ENCODE measurements at regions of chr3 and their contacts with region 1.

Region 1: DNA sequence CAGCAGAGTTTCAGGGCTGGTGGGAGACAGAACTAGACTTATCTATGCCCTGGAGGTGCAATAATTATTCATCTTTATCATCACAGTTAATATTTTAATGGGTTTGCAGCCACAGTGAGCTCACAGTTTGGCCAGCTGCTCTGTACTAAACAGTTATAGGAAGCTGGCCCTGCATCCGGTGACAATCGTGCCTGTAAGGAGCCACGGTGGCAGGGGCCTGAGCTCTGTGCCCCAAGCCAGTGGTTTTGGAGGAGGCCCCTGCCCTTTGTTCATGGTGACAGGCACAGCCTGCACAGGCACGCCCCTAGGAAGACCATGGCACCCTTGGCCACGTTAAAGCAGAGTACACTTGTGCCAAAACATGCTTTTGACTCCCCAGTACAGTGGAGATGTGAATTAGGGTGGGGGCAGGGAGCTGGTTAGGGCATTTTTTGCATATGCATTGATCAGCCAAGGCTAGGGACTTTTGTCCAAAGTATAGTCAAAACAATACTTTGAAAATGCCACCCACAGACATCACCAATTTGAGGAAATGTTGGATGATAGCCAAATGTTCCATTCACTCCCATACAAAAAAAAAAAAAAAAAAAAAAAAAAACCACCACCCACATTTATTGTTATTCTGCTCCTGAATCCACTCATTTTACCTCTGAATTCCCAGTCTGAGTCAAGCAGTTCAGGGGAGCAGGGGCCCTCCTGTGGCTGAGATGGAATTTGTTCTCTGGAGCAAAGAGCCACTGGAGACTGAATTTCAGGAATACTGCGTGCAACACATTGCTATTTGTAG is 3.4 kb upstream of the RFTN1 start:
- DNase-seq: no peak
- ATAC-seq: peak; percentile 24
- H3K4me3 ChIP-seq: peak overlapping the region; percentile 86
- H3K27ac ChIP-seq: peak overlapping the region; percentile 92
- H3K4me1 ChIP-seq: peaks cover 52% of the 10 kb centered on the region
- H3K27me3 ChIP-seq: no peaks in the 10 kb centered on the region
- CTCF ChIP-seq: peak in 1 of 3 experiments; percentile 16; a peak in 1 of 6 replicates
- EP300 ChIP-seq: peak; percentile 22 to 25; a peak in 2 of 4 replicates
- POLR2A ChIP-seq: peak; percentile 40; the same call in 1 of the 2 replicates
- RAD21 ChIP-seq: no peak

Region 2: DNA sequence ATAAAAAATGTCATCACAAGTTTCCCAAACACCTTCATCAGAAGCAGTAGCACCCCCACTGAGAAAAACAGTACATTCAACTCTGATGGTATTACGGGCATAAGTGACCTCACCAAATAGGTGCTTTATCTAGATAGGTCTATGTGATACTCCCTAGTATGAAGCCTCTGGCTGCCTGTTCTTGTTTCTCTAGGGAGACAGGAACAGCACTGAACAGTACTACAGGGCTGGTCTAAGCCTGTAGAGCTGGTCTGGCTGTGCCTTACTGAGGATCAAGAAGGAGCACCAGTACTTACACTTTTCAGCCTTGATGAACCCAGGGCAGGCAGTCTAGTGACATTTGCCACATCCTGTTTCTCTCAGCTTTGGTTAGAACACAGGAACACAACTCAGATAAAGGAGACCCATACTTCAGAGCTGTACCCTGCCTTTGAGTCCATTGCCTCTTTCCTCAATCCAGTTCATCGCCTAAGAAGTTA is 216.0 kb before region 1 on chr3:
- CTCF ChIA-PET with region 1: interaction called, 3 read pairs
- POLR2A ChIA-PET with region 1: interaction called, 3 read pairs
- RAD21 ChIA-PET with region 1: interaction called, 12 read pairs
- SMC1A ChIA-PET with region 1: interaction called, 8 read pairs
- in situ Hi-C with region 1: no loop called
- intact Hi-C with region 1: no loop called
- DNase-seq: peak; percentile 48
- ATAC-seq: peak; percentile 75
- H3K4me3 ChIP-seq: no peak overlapping the region
- H3K27ac ChIP-seq: peak overlapping the region; percentile 33
- H3K4me1 ChIP-seq: peaks cover 20% of the 10 kb centered on the region
- H3K27me3 ChIP-seq: no peaks in the 10 kb centered on the region
- CTCF ChIP-seq: no peak
- EP300 ChIP-seq: no peak
- POLR2A ChIP-seq: no peak
- RAD21 ChIP-seq: no peak

Region 3: DNA sequence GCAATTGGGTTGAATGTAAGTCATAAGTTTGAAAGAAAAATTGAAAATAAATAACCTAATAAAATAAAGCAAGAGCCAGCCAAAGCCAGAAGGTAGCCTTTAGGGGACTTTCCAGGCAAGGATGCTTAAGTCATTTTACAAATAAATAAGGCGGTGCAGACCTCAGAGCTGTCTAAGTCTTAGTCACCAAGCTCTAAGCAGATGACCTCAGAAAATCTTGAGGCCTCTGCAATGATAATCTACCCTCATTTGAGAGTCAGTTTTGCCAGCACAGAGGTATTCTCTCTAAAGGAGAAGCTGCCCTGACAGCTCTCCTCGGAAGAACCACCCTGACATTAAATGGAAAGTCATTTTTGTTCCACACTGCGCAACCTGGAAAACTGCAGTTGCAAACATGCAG is 138.0 kb before region 1 on chr3:
- CTCF ChIA-PET with region 1: interaction called, 7 read pairs
- POLR2A ChIA-PET with region 1: interaction called, 66 read pairs
- RAD21 ChIA-PET with region 1: interaction called, 52 read pairs
- SMC1A ChIA-PET with region 1: interaction called, 125 read pairs
- in situ Hi-C with region 1: loop called (anchors 5 kb)
- intact Hi-C with region 1: no loop called
- DNase-seq: no peak
- ATAC-seq: peak; percentile 70
- H3K4me3 ChIP-seq: no peak overlapping the region
- H3K27ac ChIP-seq: peak overlapping the region; percentile 88
- H3K4me1 ChIP-seq: peaks cover 93% of the 10 kb centered on the region
- H3K27me3 ChIP-seq: no peaks in the 10 kb centered on the region
- CTCF ChIP-seq: no peak
- EP300 ChIP-seq: peak in 1 of 2 experiments; percentile 82; a peak in 2 of 4 replicates
- POLR2A ChIP-seq: 0 out of 2 replicates have a peak, but pooled peaks have one; percentile 34
- RAD21 ChIP-seq: no peak

Region 4: DNA sequence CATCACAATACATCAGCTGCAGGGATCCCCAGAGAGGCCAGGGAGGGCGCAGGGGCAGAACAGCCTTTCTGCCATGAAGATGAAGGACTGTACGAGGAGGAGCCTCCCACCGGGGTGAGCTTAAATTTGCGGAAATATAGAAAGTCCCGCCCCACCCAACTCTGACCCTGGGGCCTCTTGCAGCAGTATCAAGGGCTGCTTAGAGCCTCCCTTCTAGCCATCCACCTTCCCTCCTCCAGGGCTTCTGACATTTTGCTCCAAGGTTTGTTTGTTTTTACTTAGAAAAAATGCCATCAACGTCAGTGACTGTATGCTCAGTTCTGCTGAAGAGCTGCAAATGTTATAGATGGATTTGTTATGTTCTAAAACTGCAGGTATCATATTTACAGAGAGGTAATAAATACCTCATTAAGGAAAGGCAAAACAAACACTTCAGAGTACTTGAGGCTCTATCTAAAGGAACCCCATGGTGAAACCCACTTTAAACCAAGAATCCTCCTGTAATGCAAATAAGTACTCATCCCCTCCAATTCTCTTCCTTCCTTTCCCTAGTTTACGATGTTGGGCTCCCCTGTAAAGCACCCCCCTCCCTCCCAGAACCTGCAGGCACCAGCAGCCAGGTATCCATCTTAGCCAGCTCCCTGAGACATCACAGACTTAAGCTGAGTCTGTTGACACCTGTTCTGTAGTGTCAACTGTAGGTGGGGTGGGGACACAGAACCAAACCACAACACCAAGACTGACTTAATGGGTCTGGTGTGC is 33.9 kb before region 1 on chr3:
- CTCF ChIA-PET with region 1: interaction called, 11 read pairs
- POLR2A ChIA-PET with region 1: interaction called, 4 read pairs
- RAD21 ChIA-PET with region 1: interaction called, 15 read pairs
- SMC1A ChIA-PET with region 1: interaction called, 295 read pairs
- in situ Hi-C with region 1: no loop called
- intact Hi-C with region 1: no loop called
- DNase-seq: no peak
- ATAC-seq: peak; percentile 94
- H3K4me3 ChIP-seq: no peak overlapping the region
- H3K27ac ChIP-seq: peak overlapping the region; percentile 39; the same call in 1 of the 2 replicates
- H3K4me1 ChIP-seq: peaks cover 30% of the 10 kb centered on the region
- H3K27me3 ChIP-seq: no peaks in the 10 kb centered on the region
- CTCF ChIP-seq: no peak
- EP300 ChIP-seq: no peak
- POLR2A ChIP-seq: no peak
- RAD21 ChIP-seq: 0 out of 2 replicates have a peak, but pooled peaks have one; percentile 1

Region 5: DNA sequence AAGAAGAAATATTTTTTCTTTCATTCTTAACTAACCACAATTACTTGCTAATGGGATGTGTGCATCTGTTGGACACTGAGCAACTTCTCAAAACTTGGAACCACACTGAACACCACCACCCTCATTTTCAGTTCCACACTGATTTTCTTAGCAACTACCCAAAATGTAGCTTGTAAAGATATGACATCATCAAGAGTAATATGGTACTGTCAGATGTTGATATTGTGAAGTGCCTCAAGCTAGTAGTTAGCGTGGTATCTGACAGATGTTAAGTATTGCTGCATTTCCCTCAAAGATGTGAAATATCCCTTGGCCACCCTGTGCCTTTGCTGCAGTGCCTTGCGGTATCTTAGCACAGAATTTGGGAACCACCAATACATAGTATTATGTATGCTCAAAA is 12.6 kb before region 1 on chr3:
- CTCF ChIA-PET with region 1: interaction called, 4 read pairs
- POLR2A ChIA-PET with region 1: interaction called, 32 read pairs
- RAD21 ChIA-PET with region 1: interaction called, 70 read pairs
- SMC1A ChIA-PET with region 1: interaction called, 83 read pairs
- in situ Hi-C with region 1: no loop called
- intact Hi-C with region 1: no loop called
- DNase-seq: peak; percentile 96
- ATAC-seq: peak; percentile 73
- H3K4me3 ChIP-seq: no peak overlapping the region
- H3K27ac ChIP-seq: peak overlapping the region; percentile 60
- H3K4me1 ChIP-seq: peaks cover 61% of the 10 kb centered on the region
- H3K27me3 ChIP-seq: no peaks in the 10 kb centered on the region
- CTCF ChIP-seq: no peak
- EP300 ChIP-seq: peak; percentile 91 to 92
- POLR2A ChIP-seq: no peak
- RAD21 ChIP-seq: no peak

Region 6: DNA sequence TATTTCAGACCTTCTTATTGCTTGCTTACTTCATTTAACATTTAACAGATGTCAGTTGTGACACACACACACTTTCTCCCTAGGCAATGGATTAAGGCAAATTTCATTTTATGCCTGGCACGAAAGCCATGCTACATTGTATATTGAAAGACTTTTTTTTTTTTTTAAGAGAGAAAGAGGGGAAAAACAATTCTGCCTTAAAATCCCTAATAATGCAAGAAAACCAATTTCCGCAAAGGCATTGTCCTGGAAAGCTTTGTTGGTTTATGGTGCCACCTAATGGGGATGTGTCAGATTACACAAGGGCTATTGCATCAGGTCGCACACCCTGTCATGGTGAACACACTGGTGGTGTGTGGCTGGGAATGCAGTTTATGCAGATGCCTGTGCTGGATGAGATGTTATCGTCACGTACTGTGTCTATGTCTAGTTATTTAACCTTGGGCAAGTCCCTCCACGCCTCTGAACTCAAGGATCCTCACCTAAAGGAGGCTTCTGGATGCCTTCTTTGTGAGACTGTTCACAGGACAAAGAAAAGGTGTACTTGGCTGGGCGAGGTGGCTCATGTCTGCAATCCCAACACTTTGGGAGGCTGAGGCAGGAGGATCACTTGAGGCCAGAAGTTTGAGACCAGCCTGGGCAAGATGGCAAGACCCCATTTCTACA is 33.9 kb after region 1 on chr3:
- CTCF ChIA-PET with region 1: interaction called, 16 read pairs
- POLR2A ChIA-PET with region 1: interaction called, 7 read pairs
- RAD21 ChIA-PET with region 1: interaction called, 29 read pairs
- SMC1A ChIA-PET with region 1: interaction called, 36 read pairs
- in situ Hi-C with region 1: no loop called
- intact Hi-C with region 1: loop called (anchors 1 kb)
- DNase-seq: peak; percentile 81
- ATAC-seq: peak; percentile 98
- H3K4me3 ChIP-seq: no peak overlapping the region
- H3K27ac ChIP-seq: 0 out of 2 replicates have a peak overlapping the region, but pooled peaks have one; percentile 9
- H3K4me1 ChIP-seq: peaks cover 13% of the 10 kb centered on the region
- H3K27me3 ChIP-seq: no peaks in the 10 kb centered on the region
- CTCF ChIP-seq: peak; percentile 83 to 94 (median 90)
- EP300 ChIP-seq: no peak
- POLR2A ChIP-seq: peak; percentile 25; the same call in 1 of the 2 replicates
- RAD21 ChIP-seq: peak; percentile 100

Region 7: DNA sequence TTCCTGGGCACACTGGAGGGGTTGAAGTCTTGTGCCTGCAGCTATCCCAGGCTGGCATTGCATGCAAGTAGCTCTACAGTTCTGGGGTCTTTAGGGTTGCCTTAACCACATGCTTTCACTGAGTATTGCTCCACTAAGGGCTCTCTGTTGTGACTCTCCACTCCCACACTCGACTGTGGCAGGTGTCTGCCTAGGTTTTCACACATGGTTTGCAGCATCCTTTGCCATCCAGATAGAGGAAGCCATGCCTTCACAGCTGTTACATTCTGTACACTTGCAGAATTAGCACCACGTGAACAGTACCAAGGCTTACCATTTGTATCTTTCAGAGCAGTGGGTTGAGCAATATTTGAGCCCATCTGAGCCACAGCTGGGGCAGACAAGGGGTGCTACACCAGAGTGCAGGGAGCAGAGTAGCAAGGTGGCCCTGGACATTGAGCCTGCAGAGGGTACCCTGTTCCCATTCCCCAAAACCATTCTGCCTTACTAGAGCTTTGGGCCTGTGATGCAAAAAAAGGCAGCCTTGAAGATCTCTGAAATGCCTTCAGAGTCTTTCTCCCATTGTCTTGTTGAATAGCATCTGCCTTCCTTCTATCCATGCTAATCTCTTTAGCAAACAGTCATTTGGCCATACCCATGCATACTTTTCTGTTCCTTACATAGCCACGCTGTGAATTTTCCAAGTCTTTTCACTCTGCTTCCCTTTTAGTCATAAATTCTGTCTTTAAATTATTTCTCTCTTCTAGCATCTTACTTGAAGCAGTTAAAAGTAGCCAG is 272.6 kb after region 1 on chr3:
- CTCF ChIA-PET with region 1: no interaction called
- POLR2A ChIA-PET with region 1: no interaction called
- RAD21 ChIA-PET with region 1: no interaction called
- SMC1A ChIA-PET with region 1: no interaction called
- in situ Hi-C with region 1: no loop called
- intact Hi-C with region 1: no loop called
- DNase-seq: no peak
- ATAC-seq: no peak
- H3K4me3 ChIP-seq: no peak overlapping the region
- H3K27ac ChIP-seq: no peak overlapping the region
- H3K4me1 ChIP-seq: no peaks in the 10 kb centered on the region
- H3K27me3 ChIP-seq: no peaks in the 10 kb centered on the region
- CTCF ChIP-seq: no peak
- EP300 ChIP-seq: no peak
- POLR2A ChIP-seq: no peak
- RAD21 ChIP-seq: no peak

Measured in GM12878 (cell line).